T-cell (primary cell): ENCODE measurements at regions of chr7 and their contacts with region 1.

Region 1: GRCh38 chr7:134605973-134606923 is 40.4 kb upstream of the BPGM start:
- DNase-seq: peak; percentile 8 to 80 (median 48)
- ATAC-seq: peak; percentile 82 to 86 (median 84)
- H3K4me3 ChIP-seq: no peak overlapping the region
- H3K4me3 Mint-ChIP-seq: peak overlapping the region; percentile 22 to 39 (median 28)
- H3K27ac ChIP-seq: no peak overlapping the region
- H3K27ac Mint-ChIP-seq: peak overlapping the region in 1 of 2 donors; percentile 17
- H3K4me1 ChIP-seq: no peaks in the 10 kb centered on the region
- H3K4me1 Mint-ChIP-seq: peaks cover 5 to 6% (median 6%) of the 10 kb centered on the region in 3 donors
- H3K27me3 ChIP-seq: peaks cover 0 to 10% of the 10 kb centered on the region in 2 experiments
- H3K27me3 Mint-ChIP-seq: peaks cover 8 to 24% of the 10 kb centered on the region in 2 donors

Region 2: DNA sequence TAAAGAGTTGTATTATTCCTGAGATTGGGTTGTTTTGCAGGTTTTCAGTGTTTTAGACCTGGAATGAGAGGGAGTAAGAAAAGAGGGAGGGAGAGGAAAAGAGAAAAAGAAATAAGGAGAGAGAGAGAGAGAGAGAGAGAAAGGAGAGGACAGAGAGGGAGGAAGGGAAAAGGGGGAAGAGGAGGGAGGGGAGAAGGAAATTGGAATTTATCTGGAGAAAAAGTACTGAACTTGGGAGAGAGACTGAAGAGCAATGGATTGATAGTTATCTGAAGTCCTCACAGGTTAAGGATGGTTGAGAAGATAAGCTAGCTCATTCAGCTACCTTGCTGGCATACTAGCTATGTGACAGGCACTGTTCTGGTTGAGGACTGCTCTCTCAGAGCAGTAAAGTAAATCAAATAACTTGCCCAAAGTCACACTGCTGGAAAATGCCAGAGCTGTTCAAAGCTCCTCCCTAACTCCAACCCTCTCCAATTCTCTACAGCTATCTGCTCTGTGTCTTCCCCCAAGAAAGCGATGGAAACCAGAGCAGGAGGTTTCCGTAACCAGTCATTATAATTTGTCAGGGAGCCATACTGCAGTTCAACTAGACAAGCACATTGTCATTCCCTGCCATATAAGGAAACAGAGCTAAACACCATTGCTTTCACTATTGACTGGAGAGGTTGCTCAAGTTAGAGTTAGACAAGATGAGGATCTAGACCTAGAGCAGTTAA is 183.9 kb after region 1 on chr7:
- CTCF ChIA-PET with region 1: interaction called in 1 of 2 experiments, 3 read pairs
- POLR2A ChIA-PET with region 1: interaction called in 1 of 2 experiments, 18 read pairs
- DNase-seq: no peak
- ATAC-seq: no peak
- H3K4me3 ChIP-seq: no peak overlapping the region
- H3K4me3 Mint-ChIP-seq: no peak overlapping the region
- H3K27ac ChIP-seq: no peak overlapping the region
- H3K27ac Mint-ChIP-seq: no peak overlapping the region
- H3K4me1 ChIP-seq: no peaks in the 10 kb centered on the region
- H3K4me1 Mint-ChIP-seq: no peaks in the 10 kb centered on the region
- H3K27me3 ChIP-seq: no peaks in the 10 kb centered on the region
- H3K27me3 Mint-ChIP-seq: peaks cover 0 to under 1% of the 10 kb centered on the region in 2 donors

Region 3: GRCh38 chr7:134854816-134855215 is 248.6 kb after region 1 on chr7:
- CTCF ChIA-PET with region 1: no interaction called
- POLR2A ChIA-PET with region 1: no interaction called
- DNase-seq: no peak
- ATAC-seq: no peak
- H3K4me3 ChIP-seq: no peak overlapping the region
- H3K4me3 Mint-ChIP-seq: peak overlapping the region in 1 of 3 donors; percentile 55
- H3K27ac ChIP-seq: no peak overlapping the region
- H3K27ac Mint-ChIP-seq: peak overlapping the region in 1 of 2 donors; percentile 53
- H3K4me1 ChIP-seq: peaks cover 8 to 12% of the 10 kb centered on the region in 2 experiments
- H3K4me1 Mint-ChIP-seq: peaks cover 27 to 48% (median 28%) of the 10 kb centered on the region in 3 donors
- H3K27me3 ChIP-seq: no peaks in the 10 kb centered on the region
- H3K27me3 Mint-ChIP-seq: no peaks in the 10 kb centered on the region